Common myeloid progenitor, CD34-positive (primary cell): ENCODE measurements at regions of chr14 and their contacts with region 1.

Region 1: DNA sequence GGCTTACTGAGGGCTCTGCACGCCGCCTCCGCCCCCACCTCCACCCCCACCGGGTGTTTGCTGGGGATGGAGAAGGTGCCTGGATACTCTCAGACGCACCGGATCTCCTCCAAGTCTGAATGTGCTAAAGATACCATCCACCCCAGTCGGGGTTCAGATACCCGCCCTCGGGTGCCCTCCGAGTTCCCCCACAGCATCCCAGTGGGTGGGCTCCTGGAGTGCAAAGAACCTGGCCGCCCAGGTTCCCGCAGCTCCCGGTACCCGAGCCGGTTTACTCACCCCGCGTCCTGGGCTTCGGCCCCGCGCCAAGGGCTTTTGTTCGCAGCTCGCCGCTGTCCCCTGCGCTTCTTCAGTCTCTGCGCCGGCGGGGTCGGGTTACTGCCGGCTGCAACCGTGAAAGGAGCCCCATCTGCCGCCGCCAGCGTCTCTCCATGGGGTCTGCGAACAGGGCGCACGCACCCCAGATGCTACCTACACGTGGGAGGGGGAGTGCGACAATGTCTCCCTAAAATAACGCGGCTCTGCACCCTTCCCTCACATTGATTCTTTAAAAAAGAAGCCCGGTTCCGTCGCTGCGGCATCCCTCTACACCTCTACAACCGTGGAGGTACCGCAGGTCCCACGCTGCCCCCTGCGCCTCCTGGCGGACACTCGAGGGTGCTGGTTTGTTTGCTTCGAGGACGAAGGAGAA is at the start of gene CCDC177:
- DNase-seq: peak; percentile 58 to 79 (median 77)
- H3K4me3 ChIP-seq: peak within 1 kb of the TSS in 5 of 7 experiments; percentile 8 to 64 (median 55)
- H3K27ac ChIP-seq: no peak within 1 kb of the TSS
- H3K4me1 ChIP-seq: peaks cover 0 to 35% (median 24%) of the 10 kb centered on the region in 4 experiments
- H3K27me3 ChIP-seq: peaks cover 0 to 77% (median 36%) of the 10 kb centered on the region in 5 experiments

Region 2: DNA sequence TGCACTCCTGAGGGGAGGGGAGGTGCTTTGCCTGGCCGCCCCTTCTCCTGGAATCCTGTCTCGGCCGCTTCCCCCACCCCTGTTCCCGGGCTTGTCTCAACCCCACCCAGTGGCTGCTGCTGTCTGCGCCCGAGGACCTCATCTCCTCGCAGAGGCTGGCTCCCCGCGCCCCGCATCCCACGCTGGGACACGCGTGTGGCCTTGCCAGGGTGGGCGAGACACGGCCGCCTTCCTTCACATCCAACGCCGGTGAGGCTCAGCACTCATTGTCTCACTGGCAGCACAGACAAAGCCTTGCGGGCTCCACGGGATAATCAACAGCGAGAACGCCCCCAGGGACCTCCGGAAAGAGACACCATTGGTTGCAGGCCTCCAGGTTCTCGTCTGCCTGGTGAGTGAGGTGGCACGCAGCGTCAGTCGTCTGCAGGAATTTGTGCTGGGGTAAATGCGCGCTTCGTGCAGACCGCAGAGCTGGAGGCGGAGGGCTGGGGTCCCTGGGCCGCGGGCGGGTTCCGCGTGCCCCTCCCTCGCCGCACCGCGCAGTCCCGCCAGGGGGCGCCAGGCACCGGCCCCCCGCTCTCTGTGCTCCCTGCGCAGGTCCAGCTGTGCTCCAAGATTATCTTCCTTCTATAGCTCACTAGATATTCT is 26.6 kb before region 1 on chr14:
- CTCF ChIA-PET with region 1: interaction called, 28 read pairs
- POLR2A ChIA-PET with region 1: no interaction called
- DNase-seq: peak; percentile 54 to 88 (median 84)
- H3K4me3 ChIP-seq: peak overlapping the region in 4 of 7 experiments; percentile 19 to 67 (median 50)
- H3K27ac ChIP-seq: no peak overlapping the region
- H3K4me1 ChIP-seq: peaks cover 0 to 24% (median 10%) of the 10 kb centered on the region in 4 experiments
- H3K27me3 ChIP-seq: peaks cover 0 to 39% (median 23%) of the 10 kb centered on the region in 5 experiments

Region 3: GRCh38 chr14:69586404-69586803 is 12.0 kb after region 1 on chr14:
- CTCF ChIA-PET with region 1: interaction called, 25 read pairs
- POLR2A ChIA-PET with region 1: no interaction called
- DNase-seq: no peak
- H3K4me3 ChIP-seq: no peak overlapping the region
- H3K27ac ChIP-seq: no peak overlapping the region
- H3K4me1 ChIP-seq: peaks cover 0 to 6% (median 0%) of the 10 kb centered on the region in 4 experiments
- H3K27me3 ChIP-seq: peaks cover 0 to 3% (median 0%) of the 10 kb centered on the region in 5 experiments